CD4-positive, alpha-beta T cell (primary cell): ENCODE measurements at regions of chr1 and their contacts with region 1.

Region 1: DNA sequence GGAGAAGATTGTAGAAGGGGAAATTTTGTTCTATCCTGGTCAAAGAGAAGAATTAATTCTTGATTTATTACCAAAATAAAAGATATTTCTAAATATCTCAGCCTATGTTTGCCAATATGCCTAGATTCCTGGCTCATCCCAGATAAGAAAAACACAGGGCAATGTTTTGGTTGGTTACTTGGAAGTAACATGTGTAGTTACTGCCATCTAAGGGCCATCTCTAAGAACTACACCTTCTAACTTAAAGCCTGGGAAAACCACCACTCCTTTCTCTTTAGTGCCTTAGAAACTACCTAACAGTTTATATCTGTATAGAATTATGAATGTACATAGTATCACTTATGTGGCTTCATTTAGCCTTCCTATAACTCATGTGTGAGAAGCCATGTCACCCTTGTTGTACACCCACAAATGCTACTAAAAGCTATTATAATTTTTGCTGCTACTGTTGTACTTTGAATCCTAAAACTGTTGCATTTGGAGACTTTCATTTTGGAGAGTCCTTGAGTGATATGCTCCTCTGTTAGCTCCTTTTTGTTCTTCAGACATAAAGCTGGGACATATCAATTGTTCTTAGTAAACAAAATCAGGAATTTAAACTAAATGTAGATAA is 4.5 kb downstream of the AIM2 start:
- DNase-seq: peak in 3 of 14 experiments; percentile 67 to 72 (median 72)
- ATAC-seq: no peak
- H3K4me3 ChIP-seq: no peak overlapping the region
- H3K4me3 Mint-ChIP-seq: no peak overlapping the region
- H3K27ac ChIP-seq: no peak overlapping the region
- H3K27ac Mint-ChIP-seq: peak overlapping the region; percentile 0
- H3K4me1 ChIP-seq: peaks cover 27% of the 10 kb centered on the region
- H3K4me1 Mint-ChIP-seq: peaks cover 39% of the 10 kb centered on the region
- H3K27me3 ChIP-seq: no peaks in the 10 kb centered on the region
- H3K27me3 Mint-ChIP-seq: no peaks in the 10 kb centered on the region
- CTCF ChIP-seq: peak; percentile 88

Region 2: DNA sequence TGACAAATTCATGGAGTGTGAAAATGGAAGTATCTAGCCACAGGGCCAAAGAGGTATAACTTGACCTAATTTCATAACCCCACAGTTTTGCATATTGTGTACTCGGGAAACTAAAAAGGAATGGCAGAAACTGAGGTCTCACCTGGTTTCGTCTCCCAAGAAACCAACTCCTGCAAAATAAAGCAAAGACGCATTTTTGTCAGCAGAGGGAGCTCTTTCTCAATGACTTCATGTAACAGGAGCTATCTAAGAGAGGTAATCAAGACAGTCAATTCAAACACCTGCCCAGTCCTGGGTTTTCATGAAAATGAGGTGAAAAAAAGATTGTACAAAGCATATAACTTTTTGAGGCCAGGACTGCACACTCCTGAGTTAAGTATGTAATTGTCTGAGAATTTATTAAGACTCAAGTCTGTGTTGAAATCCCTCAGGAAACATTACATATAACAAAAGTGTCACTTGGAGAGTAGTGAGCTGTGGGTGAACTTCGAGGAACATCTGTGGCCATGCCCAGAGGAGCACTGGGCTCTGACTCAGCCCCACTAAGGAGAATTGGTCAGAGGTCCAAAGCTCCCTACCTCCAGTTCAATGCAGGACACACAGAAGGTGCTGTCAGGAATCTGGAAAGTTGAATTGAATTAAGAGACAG is 1491.8 kb before region 1 on chr1:
- CTCF ChIA-PET with region 1: interaction called, 4 read pairs
- POLR2A ChIA-PET with region 1: no interaction called
- intact Hi-C with region 1: loop called in 1 of 2 experiments (anchors 5 kb)
- DNase-seq: peak in 5 of 14 experiments; percentile 8 to 64 (median 56)
- ATAC-seq: no peak
- H3K4me3 ChIP-seq: no peak overlapping the region
- H3K4me3 Mint-ChIP-seq: no peak overlapping the region
- H3K27ac ChIP-seq: no peak overlapping the region
- H3K27ac Mint-ChIP-seq: no peak overlapping the region
- H3K4me1 ChIP-seq: no peaks in the 10 kb centered on the region
- H3K4me1 Mint-ChIP-seq: no peaks in the 10 kb centered on the region
- H3K27me3 ChIP-seq: no peaks in the 10 kb centered on the region
- H3K27me3 Mint-ChIP-seq: peaks cover 19% of the 10 kb centered on the region
- CTCF ChIP-seq: peak; percentile 69

Region 3: DNA sequence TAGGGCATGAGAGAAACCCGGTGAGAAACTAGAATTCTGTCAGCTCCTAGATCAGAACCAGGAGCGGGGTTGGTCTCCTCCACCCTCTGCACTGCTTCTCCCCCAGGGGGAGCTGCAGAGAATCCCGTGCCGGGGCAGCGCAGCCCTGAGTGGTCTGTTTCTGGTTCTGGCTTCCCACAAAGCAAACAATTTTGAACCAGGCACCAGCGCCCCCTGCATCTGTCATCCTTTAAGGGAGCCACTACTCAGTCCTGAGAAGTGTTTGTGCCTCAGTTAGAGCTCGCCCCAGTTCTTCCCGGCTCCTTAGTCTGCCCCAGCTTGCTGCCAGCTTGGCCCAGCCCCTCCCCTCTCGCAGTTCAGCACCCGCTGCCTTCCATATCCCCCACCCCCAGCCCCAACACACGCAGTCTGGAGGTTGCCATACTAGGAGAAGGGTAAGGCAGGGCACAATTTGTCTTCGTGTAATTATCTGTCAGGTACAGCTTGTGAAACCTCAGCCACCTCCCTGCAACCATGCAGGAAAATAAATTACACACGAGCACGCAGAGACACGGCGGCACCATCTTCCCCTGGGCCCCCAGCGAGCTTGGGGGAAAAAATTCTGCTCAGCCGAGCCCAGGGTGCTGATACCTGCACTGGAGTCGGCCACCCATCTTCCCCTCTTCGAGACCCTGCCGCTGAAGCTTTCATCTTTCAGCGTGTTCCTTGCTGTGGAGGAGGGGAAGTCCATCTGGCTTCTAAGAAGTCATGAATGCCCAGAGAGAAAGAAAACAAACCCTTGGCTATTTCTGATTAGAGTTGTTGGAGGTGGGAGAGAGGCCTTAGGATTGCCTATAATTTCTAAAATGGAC is 954.0 kb before region 1 on chr1:
- CTCF ChIA-PET with region 1: interaction called, 5 read pairs
- POLR2A ChIA-PET with region 1: no interaction called
- intact Hi-C with region 1: loop called (anchors 5 to 10 kb)
- DNase-seq: peak in 10 of 14 experiments; percentile 6 to 64 (median 44)
- ATAC-seq: peak; percentile 90
- H3K4me3 ChIP-seq: no peak overlapping the region
- H3K4me3 Mint-ChIP-seq: peak overlapping the region; percentile 16
- H3K27ac ChIP-seq: no peak overlapping the region
- H3K27ac Mint-ChIP-seq: no peak overlapping the region
- H3K4me1 ChIP-seq: peaks cover 16% of the 10 kb centered on the region
- H3K4me1 Mint-ChIP-seq: peaks cover 9% of the 10 kb centered on the region
- H3K27me3 ChIP-seq: peaks cover 32 to 44% of the 10 kb centered on the region in 2 experiments
- H3K27me3 Mint-ChIP-seq: peaks cover 60% of the 10 kb centered on the region
- CTCF ChIP-seq: peak; percentile 59

Region 4: GRCh38 chr1:158248118-158248517 is 824.0 kb before region 1 on chr1:
- CTCF ChIA-PET with region 1: no interaction called
- POLR2A ChIA-PET with region 1: no interaction called
- intact Hi-C with region 1: loop called in 1 of 2 experiments (anchors 5 kb)
- DNase-seq: peak in 8 of 14 experiments; percentile 4 to 83 (median 20)
- ATAC-seq: peak; percentile 66
- H3K4me3 ChIP-seq: no peak overlapping the region
- H3K4me3 Mint-ChIP-seq: peak overlapping the region; percentile 22
- H3K27ac ChIP-seq: no peak overlapping the region
- H3K27ac Mint-ChIP-seq: no peak overlapping the region
- H3K4me1 ChIP-seq: peaks cover 23% of the 10 kb centered on the region
- H3K4me1 Mint-ChIP-seq: peaks cover 24% of the 10 kb centered on the region
- H3K27me3 ChIP-seq: peaks cover 6 to 14% of the 10 kb centered on the region in 2 experiments
- H3K27me3 Mint-ChIP-seq: peaks cover 59% of the 10 kb centered on the region
- CTCF ChIP-seq: no peak

Region 5: DNA sequence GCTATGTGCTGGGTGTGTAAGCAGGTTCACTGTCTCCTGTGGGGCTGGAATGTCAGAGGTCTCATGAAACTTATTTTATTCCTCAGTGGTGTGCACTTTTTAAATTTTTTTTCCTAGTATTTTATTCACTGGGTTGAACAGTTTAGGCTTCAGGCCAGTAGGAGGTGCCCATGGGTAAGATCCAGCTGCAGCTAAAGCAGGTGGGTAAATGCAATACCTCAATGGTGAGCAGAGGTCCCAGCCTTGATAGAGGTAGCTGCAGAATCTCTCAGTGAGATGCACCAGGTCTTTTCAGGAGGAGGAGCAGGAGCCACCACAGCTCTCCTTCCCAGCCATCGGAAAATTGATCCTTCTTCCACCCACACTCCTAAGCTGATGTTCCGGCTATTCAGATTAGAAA is 278.5 kb before region 1 on chr1:
- CTCF ChIA-PET with region 1: no interaction called
- POLR2A ChIA-PET with region 1: no interaction called
- intact Hi-C with region 1: loop called in 1 of 2 experiments (anchors 5 kb)
- DNase-seq: peak in 10 of 14 experiments; percentile 6 to 57 (median 22)
- ATAC-seq: no peak
- H3K4me3 ChIP-seq: no peak overlapping the region
- H3K4me3 Mint-ChIP-seq: no peak overlapping the region
- H3K27ac ChIP-seq: no peak overlapping the region
- H3K27ac Mint-ChIP-seq: no peak overlapping the region
- H3K4me1 ChIP-seq: no peaks in the 10 kb centered on the region
- H3K4me1 Mint-ChIP-seq: no peaks in the 10 kb centered on the region
- H3K27me3 ChIP-seq: no peaks in the 10 kb centered on the region
- H3K27me3 Mint-ChIP-seq: peaks cover 6% of the 10 kb centered on the region
- CTCF ChIP-seq: peak; percentile 25

Region 6: DNA sequence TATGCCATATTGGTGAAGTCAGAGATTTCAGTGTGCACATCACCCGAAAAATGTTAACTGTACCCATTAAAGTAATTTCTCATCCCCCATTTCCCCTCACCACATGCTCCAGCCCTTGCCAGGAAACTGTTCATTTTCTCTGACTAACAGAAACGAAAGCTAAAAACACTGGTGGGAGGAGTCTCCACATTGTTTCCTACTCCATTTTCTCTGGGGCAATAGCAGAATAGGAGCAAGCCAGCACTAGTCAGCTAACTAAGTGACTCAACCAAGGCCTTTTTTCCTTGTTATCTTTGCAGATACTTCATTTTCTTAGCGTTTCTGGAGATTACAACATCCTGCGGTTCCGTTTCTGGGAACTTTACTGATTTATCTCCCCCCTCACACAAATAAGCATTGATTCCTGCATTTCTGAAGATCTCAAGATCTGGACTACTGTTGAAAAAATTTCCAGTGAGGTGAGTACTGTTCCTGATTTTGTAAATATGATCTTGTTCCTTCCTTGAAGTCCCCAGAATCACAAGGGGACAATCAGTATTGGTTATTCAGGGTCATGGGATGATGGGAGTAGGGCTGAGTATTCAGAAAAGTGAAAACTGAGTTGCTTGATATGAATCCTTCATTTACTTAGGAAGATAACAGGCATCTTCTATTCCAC is 62.2 kb before region 1 on chr1 and contains the start of gene IFI16:
- CTCF ChIA-PET with region 1: interaction called, 3 read pairs
- POLR2A ChIA-PET with region 1: interaction called, 29 read pairs
- intact Hi-C with region 1: loop called in 1 of 2 experiments (anchors 5 kb)
- DNase-seq: peak in 11 of 14 experiments; percentile 22 to 92 (median 55)
- ATAC-seq: peak; percentile 81
- H3K4me3 ChIP-seq: peak within 1 kb of the TSS; percentile 69
- H3K4me3 Mint-ChIP-seq: peak within 1 kb of the TSS; percentile 98
- H3K27ac ChIP-seq: peak within 1 kb of the TSS; percentile 72 to 92
- H3K27ac Mint-ChIP-seq: peak within 1 kb of the TSS; percentile 96
- H3K4me1 ChIP-seq: peaks cover 28% of the 10 kb centered on the region
- H3K4me1 Mint-ChIP-seq: peaks cover 66% of the 10 kb centered on the region
- H3K27me3 ChIP-seq: no peaks in the 10 kb centered on the region
- H3K27me3 Mint-ChIP-seq: no peaks in the 10 kb centered on the region
- CTCF ChIP-seq: no peak
- total RNA-seq, gene IFI16: 36.9 to 37.6 TPM